WTC11 (cell line): ENCODE measurements at regions of chr6 and their contacts with region 1.

Region 1: GRCh38 chr6:32785781-32786533 is 22.6 kb upstream of the HLA-DQB2 start:
- DNase-seq: peak; percentile 42
- ATAC-seq: peak; percentile 91
- H3K4me3 Mint-ChIP-seq: no peak overlapping the region
- H3K27ac Mint-ChIP-seq: no peak overlapping the region
- H3K4me1 Mint-ChIP-seq: no peaks in the 10 kb centered on the region
- H3K27me3 Mint-ChIP-seq: peaks cover 4% of the 10 kb centered on the region; the same call in 1 of the 2 replicates
- CTCF ChIP-seq: peak; percentile 58

Region 2: GRCh38 chr6:32700391-32701040 is 85.4 kb before region 1 on chr6:
- CTCF ChIA-PET with region 1: interaction called, 14 read pairs
- POLR2A ChIA-PET with region 1: no interaction called
- DNase-seq: peak; percentile 41
- ATAC-seq: peak; percentile 86
- H3K4me3 Mint-ChIP-seq: no peak overlapping the region
- H3K27ac Mint-ChIP-seq: no peak overlapping the region
- H3K4me1 Mint-ChIP-seq: no peaks in the 10 kb centered on the region
- H3K27me3 Mint-ChIP-seq: peaks cover 5% of the 10 kb centered on the region; the same call in 1 of the 2 replicates
- CTCF ChIP-seq: peak; percentile 39